OCI-LY7 (cell line): ENCODE measurements at regions of chr17 and their contacts with region 1.

Region 1: GRCh38 chr17:74859459-74860228 is at the start of gene GRIN2C:
- DNase-seq: no peak
- H3K4me3 ChIP-seq: no peak within 1 kb of the TSS
- H3K27ac ChIP-seq: no peak within 1 kb of the TSS
- H3K4me1 ChIP-seq: peaks cover 10% of the 10 kb centered on the region
- CTCF ChIP-seq: peak; percentile 60
- total RNA-seq, gene GRIN2C: 0.22 and 0.26 TPM in 2 replicates

Region 2: GRCh38 chr17:74790161-74791054 is 69.2 kb before region 1 on chr17:
- CTCF ChIA-PET with region 1: interaction called, 38 read pairs
- POLR2A ChIA-PET with region 1: interaction called, 5 read pairs
- intact Hi-C with region 1: loop called (anchors 1 kb)
- DNase-seq: no peak
- H3K4me3 ChIP-seq: no peak overlapping the region
- H3K27ac ChIP-seq: no peak overlapping the region
- H3K4me1 ChIP-seq: peaks cover 14% of the 10 kb centered on the region
- CTCF ChIP-seq: no peak

Region 3: GRCh38 chr17:74961657-74962490 is 102.2 kb after region 1 on chr17:
- CTCF ChIA-PET with region 1: no interaction called
- POLR2A ChIA-PET with region 1: no interaction called
- intact Hi-C with region 1: no loop called
- DNase-seq: peak; percentile 90
- H3K4me3 ChIP-seq: no peak overlapping the region
- H3K27ac ChIP-seq: no peak overlapping the region
- H3K4me1 ChIP-seq: peaks cover 7% of the 10 kb centered on the region
- CTCF ChIP-seq: peak; percentile 95